PC-3 (cell line): ENCODE measurements at regions of chr19 and their contacts with region 1.

Region 1: DNA sequence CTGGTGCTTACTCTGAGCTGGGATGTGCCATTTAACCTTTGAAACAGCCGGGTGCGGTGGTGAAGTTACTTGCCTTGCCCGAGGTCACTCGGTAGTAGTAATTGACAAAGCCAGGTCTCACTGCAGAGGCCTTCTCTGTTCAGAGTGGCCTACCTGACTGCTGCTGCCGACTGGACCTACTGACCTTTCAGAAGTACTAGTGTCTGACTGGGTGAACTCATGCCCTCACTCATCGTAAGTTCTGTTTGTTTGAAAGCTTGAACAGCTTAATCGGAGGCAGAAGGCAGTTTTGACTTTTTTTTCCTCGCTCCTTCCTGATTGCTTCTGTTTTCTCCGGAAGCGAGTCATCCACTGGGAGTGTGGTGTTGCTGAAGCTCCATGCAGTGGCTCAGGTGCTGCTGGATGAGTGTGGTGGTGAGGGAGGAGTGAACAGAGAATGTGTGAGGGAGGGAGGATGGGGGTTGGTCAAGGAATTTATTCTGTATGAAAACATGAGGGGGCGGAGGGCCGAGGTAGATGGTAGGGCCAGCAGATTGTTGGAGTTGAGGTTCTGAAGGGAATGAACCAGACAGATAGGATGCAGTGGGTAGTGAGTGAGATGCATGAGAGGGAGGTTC is 2.7 kb downstream of the SPINT2 start:
- DNase-seq: peak; percentile 69
- ATAC-seq: peak; percentile 16
- H3K4me3 ChIP-seq: peak overlapping the region; percentile 91
- H3K27ac ChIP-seq: peak overlapping the region; percentile 73
- H3K4me1 ChIP-seq: peaks cover 65% of the 10 kb centered on the region
- H3K27me3 ChIP-seq: no peaks in the 10 kb centered on the region
- CTCF ChIP-seq: no peak

Region 2: DNA sequence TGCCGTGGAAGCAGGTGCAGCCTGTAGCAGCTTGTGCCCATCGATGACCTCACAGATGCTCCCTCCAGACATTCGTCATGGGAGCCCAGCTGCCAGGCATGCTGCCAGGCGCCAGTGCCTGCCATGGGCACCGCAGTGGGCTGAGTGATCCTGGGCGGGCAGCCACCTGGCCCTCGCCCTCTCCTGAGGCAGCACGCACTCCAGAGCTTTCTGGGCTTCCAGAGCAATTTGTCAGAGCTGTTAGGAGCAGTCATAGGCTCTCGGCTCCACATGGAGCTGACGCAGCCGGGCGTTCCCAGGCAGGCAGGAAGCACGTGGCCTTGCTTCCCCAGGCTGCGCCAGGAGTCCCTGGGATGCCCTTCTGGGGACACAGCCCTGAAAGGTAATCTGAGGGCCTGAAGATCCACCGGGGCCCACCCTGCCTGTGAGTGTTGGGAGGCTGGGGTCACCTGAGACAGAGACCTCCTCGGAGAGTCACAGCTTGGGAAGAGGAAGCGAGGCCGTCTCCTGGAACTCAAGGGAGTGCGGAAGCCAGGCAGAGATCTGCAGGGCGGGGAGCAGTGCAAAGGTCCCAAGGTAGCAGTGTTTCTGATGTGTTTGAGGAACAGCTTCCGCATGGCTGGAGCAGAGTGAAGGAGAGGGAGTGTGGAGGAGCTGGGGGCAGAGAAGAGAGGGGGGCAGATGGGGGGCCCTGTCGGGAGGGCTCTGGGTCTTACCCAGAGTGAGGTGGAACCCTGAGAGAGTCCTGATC is 93.6 kb before region 1 on chr19:
- CTCF ChIA-PET with region 1: no interaction called
- POLR2A ChIA-PET with region 1: no interaction called
- intact Hi-C with region 1: no loop called
- DNase-seq: no peak
- ATAC-seq: no peak
- H3K4me3 ChIP-seq: no peak overlapping the region
- H3K27ac ChIP-seq: no peak overlapping the region
- H3K4me1 ChIP-seq: no peaks in the 10 kb centered on the region
- H3K27me3 ChIP-seq: no peaks in the 10 kb centered on the region
- CTCF ChIP-seq: no peak

Region 3: GRCh38 chr19:38252941-38253691 is 14.0 kb before region 1 on chr19:
- CTCF ChIA-PET with region 1: no interaction called
- POLR2A ChIA-PET with region 1: interaction called, 10 read pairs
- intact Hi-C with region 1: no loop called
- DNase-seq: no peak
- ATAC-seq: no peak
- H3K4me3 ChIP-seq: no peak overlapping the region
- H3K27ac ChIP-seq: no peak overlapping the region
- H3K4me1 ChIP-seq: peaks cover 4% of the 10 kb centered on the region; the same call in 1 of the 2 replicates
- H3K27me3 ChIP-seq: no peaks in the 10 kb centered on the region
- CTCF ChIP-seq: no peak

Region 4: GRCh38 chr19:38304866-38305429 is 37.9 kb after region 1 on chr19:
- CTCF ChIA-PET with region 1: no interaction called
- POLR2A ChIA-PET with region 1: interaction called, 3 read pairs
- intact Hi-C with region 1: loop called (anchors 2 kb)
- DNase-seq: peak; percentile 95
- ATAC-seq: peak; percentile 70
- H3K4me3 ChIP-seq: peak overlapping the region; percentile 84
- H3K27ac ChIP-seq: peak overlapping the region; percentile 90
- H3K4me1 ChIP-seq: peaks cover 27% of the 10 kb centered on the region
- H3K27me3 ChIP-seq: no peaks in the 10 kb centered on the region
- CTCF ChIP-seq: no peak

Region 5: DNA sequence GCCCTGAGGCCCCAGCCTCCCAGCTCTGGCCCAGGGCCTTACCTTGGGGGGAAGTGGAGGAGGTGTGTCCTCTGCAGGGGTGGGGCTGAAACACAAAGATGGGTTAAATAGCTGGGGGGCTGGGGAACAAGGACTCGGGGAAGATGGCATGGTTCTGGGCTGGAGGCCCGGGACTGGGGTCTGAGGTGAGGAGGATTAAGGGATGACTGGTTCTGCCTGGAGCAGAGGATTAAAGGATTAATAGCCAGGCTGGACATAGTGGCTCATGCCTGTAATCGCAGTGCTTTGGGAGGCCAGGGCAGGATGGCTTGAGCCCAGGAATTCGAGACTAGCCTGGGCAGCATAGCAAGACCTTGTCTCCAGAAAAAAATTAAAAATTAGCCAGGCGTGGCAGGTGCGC is 339.0 kb after region 1 on chr19:
- CTCF ChIA-PET with region 1: no interaction called
- POLR2A ChIA-PET with region 1: no interaction called
- intact Hi-C with region 1: no loop called
- DNase-seq: no peak
- ATAC-seq: no peak
- H3K4me3 ChIP-seq: no peak overlapping the region
- H3K27ac ChIP-seq: no peak overlapping the region
- H3K4me1 ChIP-seq: no peaks in the 10 kb centered on the region
- H3K27me3 ChIP-seq: no peaks in the 10 kb centered on the region
- CTCF ChIP-seq: no peak